T-cell (primary cell): ENCODE measurements at regions of chr16 and their contacts with region 1.

Region 1: DNA sequence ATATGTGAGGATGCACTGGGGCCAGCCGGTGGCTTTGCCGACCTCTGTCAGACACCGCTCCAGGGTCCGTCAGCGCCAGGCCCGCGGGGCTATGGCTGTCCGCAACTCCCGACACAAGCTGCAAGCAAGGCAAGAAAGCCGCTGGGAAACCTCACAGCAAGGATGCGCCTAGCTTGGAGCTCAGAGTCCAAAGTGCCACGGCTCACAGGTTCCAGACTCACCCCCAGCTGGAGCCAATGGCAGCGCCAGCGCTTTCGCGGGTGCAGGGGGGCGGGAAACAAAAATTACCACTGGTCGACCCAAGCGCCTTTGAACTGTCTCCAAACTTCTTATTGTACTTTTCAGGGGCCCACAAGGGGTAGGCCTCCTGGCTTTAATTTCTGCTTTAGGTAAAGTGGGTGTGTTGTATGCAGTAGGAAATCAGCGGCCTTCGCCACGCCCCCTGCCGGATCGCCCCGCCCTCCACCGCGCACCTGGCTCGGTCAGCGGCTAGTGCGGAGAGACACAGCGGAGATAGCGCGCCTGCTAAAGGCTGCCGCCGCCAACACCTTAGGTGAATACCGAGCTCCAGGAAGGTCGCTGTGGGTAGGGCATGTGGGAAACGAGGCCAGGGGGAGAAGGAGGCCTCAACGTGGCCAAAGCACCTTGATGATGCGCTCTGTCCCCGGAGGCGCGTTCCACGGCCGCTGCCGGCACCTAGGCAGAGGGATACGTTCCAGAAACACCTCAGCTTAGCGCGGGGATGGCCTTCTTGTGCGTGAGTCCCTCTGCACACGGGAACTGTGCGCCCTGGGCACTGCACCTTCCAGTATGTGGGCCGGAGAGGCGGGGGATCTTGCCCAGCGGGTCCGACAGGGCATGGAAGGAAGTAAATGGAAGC is 61.0 kb upstream of the RBL2 start:
- DNase-seq: peak; percentile 55 to 87 (median 76)
- ATAC-seq: peak; percentile 96 to 98 (median 96)
- H3K4me3 ChIP-seq: peak overlapping the region; percentile 54 to 80
- H3K4me3 Mint-ChIP-seq: no peak overlapping the region
- H3K27ac ChIP-seq: no peak overlapping the region
- H3K27ac Mint-ChIP-seq: peak overlapping the region; percentile 72 to 74
- H3K4me1 ChIP-seq: peaks cover 6 to 13% of the 10 kb centered on the region in 2 experiments
- H3K4me1 Mint-ChIP-seq: peaks cover 0 to 33% (median 29%) of the 10 kb centered on the region in 3 donors
- H3K27me3 ChIP-seq: peaks cover 7 to 16% of the 10 kb centered on the region in 2 experiments
- H3K27me3 Mint-ChIP-seq: peaks cover 2% of the 10 kb centered on the region in 2 donors

Region 2: GRCh38 chr16:52812678-52813556 is 560.3 kb before region 1 on chr16:
- CTCF ChIA-PET with region 1: no interaction called
- POLR2A ChIA-PET with region 1: no interaction called
- DNase-seq: no peak
- ATAC-seq: no peak
- H3K4me3 ChIP-seq: no peak overlapping the region
- H3K4me3 Mint-ChIP-seq: no peak overlapping the region
- H3K27ac ChIP-seq: no peak overlapping the region
- H3K27ac Mint-ChIP-seq: no peak overlapping the region
- H3K4me1 ChIP-seq: no peaks in the 10 kb centered on the region
- H3K4me1 Mint-ChIP-seq: no peaks in the 10 kb centered on the region
- H3K27me3 ChIP-seq: no peaks in the 10 kb centered on the region
- H3K27me3 Mint-ChIP-seq: no peaks in the 10 kb centered on the region

Region 3: GRCh38 chr16:53489755-53490154 is 116.5 kb after region 1 on chr16:
- CTCF ChIA-PET with region 1: no interaction called
- POLR2A ChIA-PET with region 1: interaction called in 1 of 2 experiments, 17 read pairs
- DNase-seq: no peak
- ATAC-seq: no peak
- H3K4me3 ChIP-seq: no peak overlapping the region
- H3K4me3 Mint-ChIP-seq: no peak overlapping the region
- H3K27ac ChIP-seq: peak overlapping the region; percentile 6
- H3K27ac Mint-ChIP-seq: peak overlapping the region; percentile 83 to 89
- H3K4me1 ChIP-seq: no peaks in the 10 kb centered on the region
- H3K4me1 Mint-ChIP-seq: peaks cover 46 to 59% (median 49%) of the 10 kb centered on the region in 3 donors
- H3K27me3 ChIP-seq: no peaks in the 10 kb centered on the region
- H3K27me3 Mint-ChIP-seq: no peaks in the 10 kb centered on the region

Region 4: GRCh38 chr16:53726625-53727024 is 353.4 kb after region 1 on chr16:
- CTCF ChIA-PET with region 1: no interaction called
- POLR2A ChIA-PET with region 1: no interaction called
- DNase-seq: no peak
- ATAC-seq: no peak
- H3K4me3 ChIP-seq: no peak overlapping the region
- H3K4me3 Mint-ChIP-seq: no peak overlapping the region
- H3K27ac ChIP-seq: no peak overlapping the region
- H3K27ac Mint-ChIP-seq: no peak overlapping the region
- H3K4me1 ChIP-seq: no peaks in the 10 kb centered on the region
- H3K4me1 Mint-ChIP-seq: peaks cover 29 to 52% (median 44%) of the 10 kb centered on the region in 3 donors
- H3K27me3 ChIP-seq: no peaks in the 10 kb centered on the region
- H3K27me3 Mint-ChIP-seq: no peaks in the 10 kb centered on the region